Esophagus muscularis mucosa (tissue), 4 donors: ENCODE measurements at regions of chr6 and their contacts with region 1.

Region 1: GRCh38 chr6:44431118-44431725 is 43.7 kb downstream of the CDC5L start:
- DNase-seq: no peak
- H3K4me3 ChIP-seq: no peak overlapping the region
- H3K27ac ChIP-seq: no peak overlapping the region
- H3K4me1 ChIP-seq: peaks cover 10 to 42% (median 37%) of the 10 kb centered on the region in 4 donors
- H3K27me3 ChIP-seq: no peaks in the 10 kb centered on the region
- CTCF ChIP-seq: peak; percentile 59 to 77 (median 66)
- EP300 ChIP-seq: no peak
- POLR2A ChIP-seq: no peak

Region 2: DNA sequence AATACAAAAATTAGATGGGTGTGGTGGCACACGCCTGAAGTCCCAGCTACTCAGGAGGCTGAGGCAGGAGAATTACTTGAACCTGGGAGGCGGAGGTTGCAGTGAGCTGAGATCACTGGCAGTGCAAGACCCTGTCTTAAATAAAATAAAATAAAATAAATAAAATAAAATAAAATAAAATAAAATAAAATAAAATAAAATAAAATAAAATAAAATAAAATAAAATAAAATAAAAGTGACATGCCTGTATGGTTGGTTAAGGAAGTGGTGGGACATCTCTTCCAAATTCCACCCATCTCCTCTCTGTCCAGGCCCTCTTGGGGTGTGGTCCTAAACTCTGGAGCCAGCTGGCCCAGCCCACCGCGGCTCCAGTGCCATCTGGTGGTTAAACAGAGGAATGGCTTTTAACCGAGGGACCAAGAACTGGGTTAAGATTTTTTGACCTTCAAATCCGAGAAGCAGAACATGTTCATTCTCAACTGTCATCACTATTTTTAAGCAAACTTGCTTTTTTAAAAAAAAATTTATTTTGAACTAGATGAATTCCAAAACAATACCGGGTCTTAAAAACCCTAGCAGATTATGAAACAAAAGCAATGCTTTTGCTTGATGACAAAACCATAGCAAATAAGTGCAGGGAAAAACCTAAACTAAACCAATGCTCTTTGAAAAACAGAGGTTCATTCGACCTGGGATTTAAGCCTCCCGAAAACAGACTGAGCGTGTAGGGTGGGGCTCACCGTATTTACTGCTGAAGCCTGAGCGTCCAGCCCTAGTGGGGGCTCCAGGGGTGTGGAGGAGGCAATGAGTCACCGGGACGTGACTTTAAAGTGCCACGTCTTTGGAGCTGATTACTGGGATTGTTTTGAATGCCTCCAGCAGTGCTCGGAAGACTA is 25.1 kb after region 1 on chr6:
- intact Hi-C with region 1: loop called (anchors 2 kb)
- DNase-seq: no peak
- H3K4me3 ChIP-seq: peak overlapping the region in 2 of 4 donors; percentile 0 to 22
- H3K27ac ChIP-seq: no peak overlapping the region
- H3K4me1 ChIP-seq: peaks cover 10 to 22% (median 20%) of the 10 kb centered on the region in 4 donors
- H3K27me3 ChIP-seq: no peaks in the 10 kb centered on the region
- CTCF ChIP-seq: peak; percentile 76 to 86 (median 78)
- EP300 ChIP-seq: no peak
- POLR2A ChIP-seq: no peak